ENCODE measurements at regions of chr5 and their contacts with region 1.

Region 1: DNA sequence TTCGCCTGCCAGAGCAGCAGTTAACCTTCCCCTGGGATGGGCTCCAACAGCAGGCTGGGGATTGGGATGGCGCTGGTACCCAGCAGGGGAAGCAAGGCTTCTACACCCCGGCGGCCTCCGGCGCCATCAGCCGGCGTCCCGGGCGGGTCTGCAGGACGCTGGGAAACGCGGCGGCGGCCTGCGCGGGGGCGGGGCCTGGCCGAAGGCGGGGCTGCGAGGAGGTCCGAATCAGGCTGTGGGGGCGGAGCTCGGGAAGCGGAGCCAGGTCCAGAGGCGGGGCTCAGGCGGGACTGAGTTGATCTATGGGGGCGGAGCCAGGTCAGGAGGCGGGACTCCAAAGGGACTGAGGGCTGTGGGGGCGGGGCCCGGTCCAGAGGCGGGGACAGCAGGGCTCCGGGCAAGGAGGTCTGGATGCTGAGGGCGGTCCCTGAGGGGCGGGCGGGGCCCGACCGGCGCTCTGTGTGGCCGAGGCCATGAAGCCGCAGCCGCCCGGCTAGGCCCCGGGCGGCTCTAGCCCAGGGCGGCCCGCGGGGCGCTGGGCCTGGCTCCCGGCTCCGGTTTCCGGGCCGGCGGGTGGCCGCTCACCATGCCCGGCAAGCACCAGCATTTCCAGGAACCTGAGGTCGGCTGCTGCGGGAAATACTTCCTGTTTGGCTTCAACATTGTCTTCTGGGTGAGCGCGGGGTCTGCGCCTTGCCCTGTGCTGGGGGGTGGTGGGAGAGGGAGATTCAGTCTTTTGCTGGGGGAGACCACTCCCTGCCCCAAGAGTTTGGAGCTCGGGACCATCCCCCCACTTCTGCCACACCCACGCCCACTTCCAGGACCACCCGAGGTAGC is at the start of gene TSPAN17:
- DNase-seq: peak; percentile 87 to 99 (median 89)
- ATAC-seq: peak; percentile 97
- H3K4me3 ChIP-seq: peak within 1 kb of the TSS; percentile 50
- H3K4me3 Mint-ChIP-seq: peak within 1 kb of the TSS; percentile 79 to 94 (median 89)
- H3K27ac ChIP-seq: peak within 1 kb of the TSS; percentile 68
- H3K27ac Mint-ChIP-seq: peak within 1 kb of the TSS; percentile 79 to 95 (median 90)
- H3K4me1 ChIP-seq: peaks cover 21 to 28% of the 10 kb centered on the region in 2 donors
- H3K4me1 Mint-ChIP-seq: peaks cover 29 to 55% (median 45%) of the 10 kb centered on the region in 7 donors
- H3K27me3 ChIP-seq: no peaks in the 10 kb centered on the region
- H3K27me3 Mint-ChIP-seq: no peaks in the 10 kb centered on the region
- total RNA-seq, gene TSPAN17: 16.6 to 47.6 (median 21.1) TPM

Region 2: DNA sequence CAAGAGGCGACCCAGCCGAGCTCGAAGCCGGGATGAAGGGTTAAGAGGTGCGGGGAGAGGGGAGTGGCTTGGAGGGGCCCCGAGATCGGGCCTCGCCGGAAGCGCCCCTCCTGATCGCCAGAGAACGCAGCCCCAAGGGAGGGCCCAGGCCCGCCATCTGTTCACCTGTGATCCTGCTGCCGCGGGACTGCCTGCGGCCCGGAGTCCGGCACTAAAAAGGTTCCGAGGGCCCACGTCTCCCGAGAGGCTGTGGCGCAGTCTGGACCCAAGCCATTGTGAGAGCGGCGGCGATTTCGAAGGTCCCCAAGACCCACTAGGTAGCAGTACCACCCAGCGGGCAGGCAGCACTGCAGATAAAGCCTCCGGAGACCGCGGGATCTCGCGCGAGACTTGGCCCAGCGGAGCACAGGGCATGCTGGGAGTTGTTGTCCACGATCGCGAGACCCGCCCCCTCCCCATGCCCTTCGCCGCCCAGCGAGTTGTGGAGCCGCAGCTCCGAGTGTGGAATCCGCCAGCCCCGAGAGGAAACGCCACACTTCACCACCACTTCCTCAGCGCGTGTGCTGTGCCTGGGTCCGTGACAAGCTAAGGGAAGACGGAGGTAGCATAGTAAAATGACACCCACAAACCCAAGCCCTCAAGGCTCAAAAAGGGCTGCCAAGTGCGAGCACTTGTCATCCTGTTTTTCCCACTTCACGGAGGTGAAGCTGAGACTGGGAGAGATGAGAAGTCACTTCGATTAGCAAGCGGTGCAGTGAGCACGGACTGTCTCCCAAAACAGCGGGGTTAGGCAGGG is 285.6 kb before region 1 on chr5 and contains the start of gene KIAA1191:
- CTCF ChIA-PET with region 1: no interaction called
- POLR2A ChIA-PET with region 1: no interaction called
- intact Hi-C with region 1: loop called in 1 of 2 experiments (anchors 1 kb)
- DNase-seq: peak; percentile 80 to 96 (median 93)
- ATAC-seq: peak; percentile 96
- H3K4me3 ChIP-seq: peak within 1 kb of the TSS; percentile 82
- H3K4me3 Mint-ChIP-seq: peak within 1 kb of the TSS; percentile 93 to 99 (median 98)
- H3K27ac ChIP-seq: peak within 1 kb of the TSS; percentile 80
- H3K27ac Mint-ChIP-seq: peak within 1 kb of the TSS; percentile 91 to 99 (median 94)
- H3K4me1 ChIP-seq: peaks cover 19 to 24% of the 10 kb centered on the region in 2 donors
- H3K4me1 Mint-ChIP-seq: peaks cover 21 to 49% (median 38%) of the 10 kb centered on the region in 7 donors
- H3K27me3 ChIP-seq: no peaks in the 10 kb centered on the region
- H3K27me3 Mint-ChIP-seq: no peaks in the 10 kb centered on the region
- total RNA-seq, gene KIAA1191: 59.4 to 76.6 (median 65.9) TPM

Region 3: DNA sequence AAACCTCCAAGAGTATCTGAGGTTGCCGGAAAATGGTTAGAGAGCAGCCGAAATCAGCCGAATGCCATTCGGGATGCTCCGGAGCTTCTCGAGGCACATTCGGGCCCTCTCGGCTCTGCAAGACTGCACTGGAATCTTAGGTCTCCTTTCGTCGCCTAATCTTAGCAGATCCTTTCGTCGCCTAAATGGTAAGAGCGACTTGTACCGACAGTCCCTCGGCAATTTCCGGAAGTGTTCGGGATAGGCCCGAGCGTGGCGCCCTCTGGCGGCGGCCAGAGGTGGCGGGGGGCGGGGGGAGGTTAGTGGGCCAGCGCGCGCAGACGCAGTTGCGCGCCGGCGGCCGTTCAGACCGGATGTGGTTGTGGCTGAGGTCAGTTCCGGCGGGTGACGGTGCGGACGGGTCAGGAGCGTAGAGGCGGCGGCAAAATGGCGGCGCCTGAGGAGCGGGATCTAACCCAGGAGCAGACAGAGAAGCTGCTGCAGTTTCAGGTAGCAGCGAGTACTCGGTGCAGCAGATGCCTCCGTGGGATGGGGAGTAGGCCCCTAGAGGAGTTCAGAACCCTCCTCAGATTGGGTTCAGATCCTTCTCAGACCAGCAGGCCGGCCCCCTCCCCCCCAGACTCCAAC is 199.2 kb before region 1 on chr5 and contains the start of gene FAF2:
- CTCF ChIA-PET with region 1: no interaction called
- POLR2A ChIA-PET with region 1: interaction called, 5 read pairs
- intact Hi-C with region 1: loop called in 1 of 2 experiments (anchors 1 kb)
- DNase-seq: peak; percentile 97 to 100 (median 99)
- ATAC-seq: peak; percentile 97
- H3K4me3 ChIP-seq: peak within 1 kb of the TSS; percentile 99
- H3K4me3 Mint-ChIP-seq: peak within 1 kb of the TSS; percentile 92 to 99 (median 98)
- H3K27ac ChIP-seq: peak within 1 kb of the TSS; percentile 94
- H3K27ac Mint-ChIP-seq: peak within 1 kb of the TSS; percentile 81 to 99 (median 98)
- H3K4me1 ChIP-seq: peaks cover 22 to 23% of the 10 kb centered on the region in 2 donors
- H3K4me1 Mint-ChIP-seq: peaks cover 25 to 49% (median 40%) of the 10 kb centered on the region in 7 donors
- H3K27me3 ChIP-seq: no peaks in the 10 kb centered on the region
- H3K27me3 Mint-ChIP-seq: peaks cover 0 to 8% (median 0%) of the 10 kb centered on the region in 5 donors
- total RNA-seq, gene FAF2: 28.0 to 43.2 (median 31.2) TPM

Region 4: DNA sequence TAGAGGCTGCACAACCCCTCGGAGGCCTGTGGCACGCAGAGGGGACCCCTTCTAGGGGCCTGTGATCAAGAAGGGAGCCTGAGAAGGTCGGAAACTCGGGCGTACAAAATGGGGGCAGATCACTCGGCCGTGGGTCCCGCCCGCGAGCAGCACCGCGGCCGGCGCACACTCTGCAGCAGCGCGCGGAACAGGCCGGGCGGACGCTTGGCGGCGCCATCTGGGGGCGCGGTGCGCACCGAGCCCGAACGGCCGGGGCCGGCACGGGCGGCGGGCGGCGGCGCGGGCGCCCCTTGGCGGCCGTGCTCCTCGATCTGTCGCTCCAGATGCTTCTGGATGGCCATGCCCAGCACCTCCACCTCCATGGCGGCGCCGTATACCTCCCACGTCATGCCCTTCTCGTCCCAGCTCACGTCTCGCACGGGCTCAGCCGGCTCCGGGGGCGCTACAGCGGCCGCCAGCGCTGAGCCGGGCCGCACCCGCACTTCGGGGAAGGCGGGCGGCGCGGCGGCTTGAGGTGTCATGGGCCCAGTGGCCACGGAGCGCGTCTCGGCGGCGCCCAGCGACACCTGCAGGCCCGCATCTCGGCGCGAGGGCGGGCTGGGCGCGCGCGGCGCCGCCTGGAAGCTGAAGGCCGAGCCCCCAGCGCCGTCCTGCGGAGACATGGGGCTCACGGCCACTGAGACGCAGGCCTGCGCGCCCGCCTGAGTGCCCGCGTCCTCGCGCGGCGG is 50.4 kb before region 1 on chr5:
- CTCF ChIA-PET with region 1: interaction called, 3 read pairs
- POLR2A ChIA-PET with region 1: no interaction called
- intact Hi-C with region 1: loop called in 1 of 2 experiments (anchors 2 kb)
- DNase-seq: peak; percentile 53 to 72 (median 67)
- ATAC-seq: peak; percentile 88
- H3K4me3 ChIP-seq: peak overlapping the region; percentile 41
- H3K4me3 Mint-ChIP-seq: peak overlapping the region; percentile 69 to 83 (median 79)
- H3K27ac ChIP-seq: peak overlapping the region; percentile 21
- H3K27ac Mint-ChIP-seq: peak overlapping the region in 7 of 9 donors; percentile 36 to 75 (median 50)
- H3K4me1 ChIP-seq: peaks cover 7% of the 10 kb centered on the region in 2 donors
- H3K4me1 Mint-ChIP-seq: peaks cover 4 to 8% (median 6%) of the 10 kb centered on the region in 7 donors
- H3K27me3 ChIP-seq: no peaks in the 10 kb centered on the region
- H3K27me3 Mint-ChIP-seq: peaks cover 0 to 4% (median 0%) of the 10 kb centered on the region in 5 donors

Region 5: DNA sequence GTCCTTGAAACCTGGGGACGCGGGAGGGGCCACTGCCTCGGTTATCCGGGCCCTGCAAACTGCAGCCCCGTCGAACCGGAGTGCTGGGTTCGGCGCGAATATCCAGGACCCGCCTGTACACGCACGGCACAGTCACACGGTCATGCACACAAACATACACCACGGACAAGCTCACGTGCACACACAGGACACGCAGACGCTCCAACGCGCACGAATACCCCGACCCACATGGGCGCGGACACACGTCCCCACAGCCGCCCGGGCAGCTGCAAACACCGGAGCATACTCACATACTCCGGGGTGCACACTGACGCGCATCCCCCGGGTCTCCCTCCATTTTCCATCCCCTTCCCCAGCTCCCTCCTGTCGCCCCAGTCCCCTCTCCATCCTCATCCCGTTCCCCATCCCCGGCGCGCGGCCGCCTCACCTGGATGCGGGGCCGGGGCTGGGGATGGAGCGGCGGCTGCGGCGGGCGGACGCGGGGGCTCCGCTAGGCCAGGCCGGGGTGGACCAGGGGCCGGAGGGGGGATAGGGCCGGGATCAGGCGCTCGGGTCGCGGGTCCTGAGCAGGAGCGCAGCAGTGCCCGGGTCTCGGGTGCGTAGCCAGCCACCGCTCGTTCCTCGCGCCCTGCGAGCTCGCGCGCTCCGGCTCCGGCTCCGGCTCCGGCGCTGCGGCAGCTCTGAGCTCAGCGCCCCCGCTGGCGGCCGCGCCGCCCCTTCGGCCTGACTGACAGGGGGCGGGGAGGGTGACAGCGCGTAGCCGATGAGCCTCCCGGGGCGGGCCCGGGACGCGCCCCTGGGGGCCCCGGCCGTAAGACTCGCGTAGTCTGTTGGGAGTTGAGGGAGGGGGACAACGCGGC is 17.2 kb before region 1 on chr5 and contains the starts of genes EIF4E1B and SNCB:
- CTCF ChIA-PET with region 1: interaction called, 3 read pairs
- POLR2A ChIA-PET with region 1: interaction called, 3 read pairs
- intact Hi-C with region 1: loop called in 1 of 2 experiments (anchors 1 kb)
- DNase-seq: peak in 5 of 9 donors; percentile 20 to 69 (median 25)
- ATAC-seq: peak; percentile 83
- H3K4me3 ChIP-seq: peak within 1 kb of the TSS; percentile 43
- H3K4me3 Mint-ChIP-seq: peak within 1 kb of the TSS; percentile 27 to 72 (median 58)
- H3K27ac ChIP-seq: no peak within 1 kb of the TSS
- H3K27ac Mint-ChIP-seq: peak within 1 kb of the TSS in 1 of 9 donors; percentile 56
- H3K4me1 ChIP-seq: peaks cover 8 to 15% of the 10 kb centered on the region in 2 donors
- H3K4me1 Mint-ChIP-seq: peaks cover 7 to 16% (median 11%) of the 10 kb centered on the region in 7 donors
- H3K27me3 ChIP-seq: peaks cover 4 to 21% of the 10 kb centered on the region in 2 donors
- H3K27me3 Mint-ChIP-seq: peaks cover 54 to 85% (median 71%) of the 10 kb centered on the region in 5 donors
- total RNA-seq, gene EIF4E1B: not detected
- total RNA-seq, gene SNCB: not detected

Region 6: GRCh38 chr5:177086924-177087706 is 439.9 kb after region 1 on chr5:
- CTCF ChIA-PET with region 1: no interaction called
- POLR2A ChIA-PET with region 1: no interaction called
- intact Hi-C with region 1: loop called in 1 of 2 experiments (anchors 1 kb)
- DNase-seq: peak; percentile 60 to 79 (median 71)
- ATAC-seq: peak; percentile 86
- H3K4me3 ChIP-seq: peak overlapping the region; percentile 30
- H3K4me3 Mint-ChIP-seq: peak overlapping the region in 8 of 10 donors; percentile 5 to 80 (median 35)
- H3K27ac ChIP-seq: no peak overlapping the region
- H3K27ac Mint-ChIP-seq: no peak overlapping the region
- H3K4me1 ChIP-seq: peaks cover 4 to 6% of the 10 kb centered on the region in 2 donors
- H3K4me1 Mint-ChIP-seq: peaks cover 10 to 18% (median 11%) of the 10 kb centered on the region in 7 donors
- H3K27me3 ChIP-seq: no peaks in the 10 kb centered on the region
- H3K27me3 Mint-ChIP-seq: peaks cover 0 to 44% (median 8%) of the 10 kb centered on the region in 5 donors

Measured in naive thymus-derived CD4-positive, alpha-beta T cell (primary cell).